ENCODE measurements at regions of chr3 and their contacts with region 1.

Region 1: DNA sequence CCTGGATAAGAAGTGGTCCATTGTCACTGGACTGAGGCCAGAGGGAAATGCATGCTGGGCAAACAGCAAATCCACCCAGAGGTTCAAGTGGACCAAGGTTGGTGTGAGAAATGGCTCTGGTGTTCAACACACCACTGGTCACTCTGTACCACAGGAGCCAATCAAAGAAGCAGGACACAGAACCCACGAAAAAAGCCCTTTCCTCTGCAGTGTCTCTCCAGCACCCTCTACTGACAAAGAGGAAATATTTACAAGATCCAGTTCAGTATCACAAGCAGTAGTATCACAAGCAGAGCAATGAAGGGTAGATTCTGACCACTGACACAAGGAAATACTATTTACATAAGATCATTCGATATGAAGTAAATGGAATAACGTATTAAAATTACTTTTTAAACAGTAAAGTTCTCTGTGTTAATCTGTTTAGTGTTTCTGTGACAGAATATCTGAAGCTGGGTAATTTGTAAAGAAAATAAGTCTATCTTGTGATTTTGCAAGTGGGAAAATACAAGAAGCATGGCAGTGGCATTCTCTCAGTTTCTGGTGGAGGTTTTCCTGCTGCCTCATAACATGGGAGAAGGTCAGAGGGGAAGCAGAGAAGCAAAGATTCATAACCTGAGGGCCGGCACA is 390.7 kb downstream of the EFHB start:
- DNase-seq: peak; percentile 21
- ATAC-seq: peak; percentile 57
- H3K4me3 Mint-ChIP-seq: peak overlapping the region; percentile 21
- H3K27ac Mint-ChIP-seq: peak overlapping the region; percentile 95
- H3K4me1 Mint-ChIP-seq: peaks cover 69% of the 10 kb centered on the region
- H3K27me3 Mint-ChIP-seq: no peaks in the 10 kb centered on the region
- CTCF ChIP-seq: peak; percentile 27

Region 2: GRCh38 chr3:18424729-18425640 is 1118.3 kb before region 1 on chr3 and contains the start of gene SATB1:
- CTCF ChIA-PET with region 1: no interaction called
- POLR2A ChIA-PET with region 1: no interaction called
- intact Hi-C with region 1: loop called (anchors 10 kb)
- DNase-seq: peak; percentile 68
- ATAC-seq: peak; percentile 49
- H3K4me3 Mint-ChIP-seq: peak within 1 kb of the TSS; percentile 91
- H3K27ac Mint-ChIP-seq: peak within 1 kb of the TSS; percentile 87
- H3K4me1 Mint-ChIP-seq: peaks cover 40% of the 10 kb centered on the region
- H3K27me3 Mint-ChIP-seq: no peaks in the 10 kb centered on the region
- CTCF ChIP-seq: no peak
- total RNA-seq, gene SATB1: 23.0 and 30.8 TPM in 2 replicates

Region 3: DNA sequence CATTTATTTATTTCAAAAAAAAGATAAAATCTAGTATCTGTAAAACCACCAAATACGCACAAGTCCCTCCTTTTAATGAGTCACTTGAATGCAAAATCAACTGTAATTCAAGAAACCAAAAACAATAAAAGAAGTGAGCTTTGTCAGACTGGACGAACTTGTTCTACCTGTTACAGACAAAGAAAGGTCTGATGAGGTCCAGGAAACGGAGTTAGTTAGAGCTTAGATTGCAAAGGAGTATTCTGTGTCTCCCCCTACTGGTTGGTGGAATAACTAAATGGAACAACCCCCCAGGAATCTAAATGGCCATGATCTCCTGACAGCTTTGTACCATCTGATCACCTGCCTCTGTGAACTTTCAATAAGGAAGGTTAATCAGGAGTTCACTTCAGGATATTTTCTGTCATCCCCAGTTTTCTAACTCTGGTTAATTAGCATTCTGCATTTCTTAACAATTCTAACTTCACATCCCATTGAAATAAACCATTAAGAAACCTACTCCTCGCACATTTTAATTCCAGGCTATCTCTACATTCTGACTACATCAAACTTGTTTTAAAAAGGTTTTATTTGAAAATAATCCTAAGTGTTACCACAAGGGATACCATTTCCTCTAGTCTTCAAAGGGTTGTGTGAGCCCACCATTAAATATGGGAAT is 785.2 kb before region 1 on chr3:
- CTCF ChIA-PET with region 1: no interaction called
- POLR2A ChIA-PET with region 1: no interaction called
- intact Hi-C with region 1: loop called (anchors 1 kb)
- DNase-seq: no peak
- ATAC-seq: peak; percentile 78
- H3K4me3 Mint-ChIP-seq: no peak overlapping the region
- H3K27ac Mint-ChIP-seq: no peak overlapping the region
- H3K4me1 Mint-ChIP-seq: no peaks in the 10 kb centered on the region
- H3K27me3 Mint-ChIP-seq: no peaks in the 10 kb centered on the region
- CTCF ChIP-seq: peak; percentile 27

Region 4: DNA sequence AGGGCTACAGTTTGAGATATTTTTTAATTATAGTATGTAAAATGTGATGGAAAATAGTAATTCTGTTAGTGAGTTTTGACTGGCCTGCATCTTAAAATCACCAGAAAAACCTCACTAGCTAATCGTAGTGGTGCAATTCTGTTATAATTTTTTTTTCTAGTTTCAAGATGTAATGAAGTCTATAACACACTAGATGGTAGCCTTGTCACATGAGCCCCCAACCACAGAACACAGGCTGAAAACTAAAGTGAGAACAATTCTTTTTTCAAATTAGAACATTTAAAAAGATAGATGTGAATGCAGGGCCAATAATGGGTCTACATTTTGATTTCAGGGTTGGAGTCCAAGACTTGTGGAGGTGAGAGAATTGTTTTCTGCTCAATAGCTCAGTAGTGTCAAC is 478.3 kb before region 1 on chr3:
- CTCF ChIA-PET with region 1: no interaction called
- POLR2A ChIA-PET with region 1: no interaction called
- intact Hi-C with region 1: loop called (anchors 1 kb)
- DNase-seq: no peak
- ATAC-seq: no peak
- H3K4me3 Mint-ChIP-seq: no peak overlapping the region
- H3K27ac Mint-ChIP-seq: no peak overlapping the region
- H3K4me1 Mint-ChIP-seq: no peaks in the 10 kb centered on the region
- H3K27me3 Mint-ChIP-seq: no peaks in the 10 kb centered on the region
- CTCF ChIP-seq: no peak

Region 5: GRCh38 chr3:19213601-19214220 is 329.6 kb before region 1 on chr3:
- CTCF ChIA-PET with region 1: interaction called, 5 read pairs
- POLR2A ChIA-PET with region 1: no interaction called
- intact Hi-C with region 1: loop called (anchors 1 kb)
- DNase-seq: no peak
- ATAC-seq: peak; percentile 74
- H3K4me3 Mint-ChIP-seq: no peak overlapping the region
- H3K27ac Mint-ChIP-seq: no peak overlapping the region
- H3K4me1 Mint-ChIP-seq: peaks cover 4% of the 10 kb centered on the region
- H3K27me3 Mint-ChIP-seq: no peaks in the 10 kb centered on the region
- CTCF ChIP-seq: no peak

Region 6: GRCh38 chr3:19866751-19867347 is 323.5 kb after region 1 on chr3:
- CTCF ChIA-PET with region 1: interaction called, 7 read pairs
- POLR2A ChIA-PET with region 1: no interaction called
- intact Hi-C with region 1: loop called (anchors 2 kb)
- DNase-seq: no peak
- ATAC-seq: peak; percentile 71
- H3K4me3 Mint-ChIP-seq: no peak overlapping the region
- H3K27ac Mint-ChIP-seq: no peak overlapping the region
- H3K4me1 Mint-ChIP-seq: peaks cover 3% of the 10 kb centered on the region
- H3K27me3 Mint-ChIP-seq: peaks cover 3% of the 10 kb centered on the region
- CTCF ChIP-seq: no peak

Region 7: GRCh38 chr3:20185701-20186598 is 642.6 kb after region 1 on chr3 and contains the start of gene SGO1:
- CTCF ChIA-PET with region 1: no interaction called
- POLR2A ChIA-PET with region 1: no interaction called
- intact Hi-C with region 1: loop called (anchors 5 kb)
- DNase-seq: peak; percentile 100
- ATAC-seq: peak; percentile 93
- H3K4me3 Mint-ChIP-seq: no peak within 1 kb of the TSS
- H3K27ac Mint-ChIP-seq: no peak within 1 kb of the TSS
- H3K4me1 Mint-ChIP-seq: no peaks in the 10 kb centered on the region
- H3K27me3 Mint-ChIP-seq: no peaks in the 10 kb centered on the region
- CTCF ChIP-seq: no peak
- total RNA-seq, gene SGO1: 5.9 and 7.2 TPM in 2 replicates

Measured in activated B cell treated with CpG ODN at 0.5 μM for 24 hours (primary cell).